Endothelial cell of umbilical vein (primary cell): ENCODE measurements at regions of chr6 and their contacts with region 1.

Region 1: DNA sequence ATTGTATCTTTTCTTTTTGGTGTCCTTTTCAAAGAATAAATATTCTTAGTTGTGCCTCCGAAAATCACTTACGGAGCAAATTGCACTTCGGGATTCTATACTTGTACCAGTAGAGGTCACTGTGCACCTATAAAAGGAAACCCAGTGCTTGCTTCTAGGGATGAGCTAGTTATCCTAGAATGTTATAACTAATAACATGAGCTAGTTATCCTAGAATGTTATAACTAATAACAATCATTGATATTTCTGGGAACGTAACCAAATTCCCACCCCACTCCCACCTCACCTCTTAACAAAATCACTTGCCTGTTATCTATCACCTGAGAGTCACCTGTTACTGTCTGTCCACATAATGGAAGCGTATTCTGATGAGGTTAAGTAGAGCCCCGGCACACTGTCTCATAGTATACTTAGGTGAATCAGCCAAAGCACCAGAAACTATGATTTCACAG is 126.9 kb upstream of the TIAM2 start:
- DNase-seq: peak; percentile 57
- H3K4me3 ChIP-seq: no peak overlapping the region
- H3K27ac ChIP-seq: no peak overlapping the region
- H3K4me1 ChIP-seq: no peaks in the 10 kb centered on the region
- H3K27me3 ChIP-seq: no peaks in the 10 kb centered on the region
- CTCF ChIP-seq: peak; percentile 53 to 54
- POLR2A ChIP-seq: no peak

Region 2: GRCh38 chr6:154822947-154823558 is 45.1 kb before region 1 on chr6:
- CTCF ChIA-PET with region 1: interaction called, 3 read pairs
- POLR2A ChIA-PET with region 1: no interaction called
- dilution Hi-C with region 1: no loop called
- intact Hi-C with region 1: loop called (anchors 2 kb)
- DNase-seq: no peak
- H3K4me3 ChIP-seq: no peak overlapping the region
- H3K27ac ChIP-seq: no peak overlapping the region
- H3K4me1 ChIP-seq: peaks cover 13% of the 10 kb centered on the region
- H3K27me3 ChIP-seq: no peaks in the 10 kb centered on the region
- CTCF ChIP-seq: no peak
- POLR2A ChIP-seq: no peak

Region 3: GRCh38 chr6:154921482-154921881 is 53.3 kb after region 1 on chr6:
- CTCF ChIA-PET with region 1: interaction called, 44 read pairs
- POLR2A ChIA-PET with region 1: no interaction called
- dilution Hi-C with region 1: no loop called
- intact Hi-C with region 1: no loop called
- DNase-seq: peak; percentile 23
- H3K4me3 ChIP-seq: no peak overlapping the region
- H3K27ac ChIP-seq: no peak overlapping the region
- H3K4me1 ChIP-seq: peaks cover 9% of the 10 kb centered on the region
- H3K27me3 ChIP-seq: no peaks in the 10 kb centered on the region
- CTCF ChIP-seq: no peak
- POLR2A ChIP-seq: no peak

Region 4: DNA sequence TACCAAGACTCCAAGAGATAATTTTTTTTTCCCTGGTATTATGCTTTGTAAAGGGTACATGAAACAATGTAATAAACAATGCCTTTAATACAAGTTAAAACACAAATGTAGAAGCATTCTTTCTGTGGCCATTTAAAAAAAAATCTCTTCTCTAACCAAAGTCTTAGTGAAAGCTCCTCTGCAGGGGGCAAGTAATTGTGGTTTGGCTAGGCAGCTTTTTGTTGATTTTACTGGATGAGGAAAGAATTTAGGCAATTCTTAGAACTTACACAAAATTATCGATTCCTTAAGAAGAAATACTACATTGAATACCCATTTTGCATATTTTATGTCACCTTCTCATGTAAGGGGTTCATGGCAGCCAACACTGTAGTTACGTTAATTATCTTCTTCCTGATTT is 433.7 kb after region 1 on chr6:
- CTCF ChIA-PET with region 1: interaction called, 10 read pairs
- POLR2A ChIA-PET with region 1: no interaction called
- dilution Hi-C with region 1: no loop called
- intact Hi-C with region 1: no loop called
- DNase-seq: no peak
- H3K4me3 ChIP-seq: no peak overlapping the region
- H3K27ac ChIP-seq: no peak overlapping the region
- H3K4me1 ChIP-seq: no peaks in the 10 kb centered on the region
- H3K27me3 ChIP-seq: no peaks in the 10 kb centered on the region
- CTCF ChIP-seq: no peak
- POLR2A ChIP-seq: no peak